Heart right ventricle (tissue), 16 donors: ENCODE measurements at regions of chr9 and their contacts with region 1.

Region 1: GRCh38 chr9:117636681-117637080 is 67.5 kb upstream of the TLR4 start:
- DNase-seq: no peak
- ATAC-seq: no peak
- H3K4me3 ChIP-seq: no peak overlapping the region
- H3K27ac ChIP-seq: no peak overlapping the region
- H3K4me1 ChIP-seq: no peaks in the 10 kb centered on the region
- H3K27me3 ChIP-seq: peaks cover 0 to 19% (median 12%) of the 10 kb centered on the region in 7 donors
- CTCF ChIP-seq: no peak

Region 2: DNA sequence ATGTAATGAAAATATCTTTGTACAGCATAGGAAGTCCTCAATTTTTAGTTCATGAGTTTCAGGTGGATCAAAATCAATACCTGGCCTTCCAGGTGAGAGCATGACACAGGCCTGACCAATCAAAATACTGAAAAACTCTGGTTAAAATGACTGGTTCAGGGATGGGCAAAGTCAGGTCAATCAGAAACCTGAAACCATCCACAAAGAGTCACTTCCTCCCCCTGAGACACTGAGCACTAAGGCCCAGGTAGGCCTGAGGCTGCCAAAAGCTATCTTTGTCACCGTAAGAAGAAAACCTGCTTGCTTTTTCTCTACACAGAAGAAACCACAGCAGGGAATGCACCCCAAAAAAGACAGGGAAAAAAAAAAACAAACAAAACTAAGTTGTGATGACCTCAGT is 512.3 kb after region 1 on chr9:
- intact Hi-C with region 1: no loop called
- DNase-seq: no peak
- ATAC-seq: no peak
- H3K4me3 ChIP-seq: no peak overlapping the region
- H3K27ac ChIP-seq: no peak overlapping the region
- H3K4me1 ChIP-seq: no peaks in the 10 kb centered on the region
- H3K27me3 ChIP-seq: peaks cover 0 to 3% (median 0%) of the 10 kb centered on the region in 7 donors
- CTCF ChIP-seq: no peak

Region 3: GRCh38 chr9:118577121-118577520 is 940.4 kb after region 1 on chr9:
- intact Hi-C with region 1: loop called in 1 of 10 experiments (anchors 10 kb)
- DNase-seq: no peak
- ATAC-seq: no peak
- H3K4me3 ChIP-seq: no peak overlapping the region
- H3K27ac ChIP-seq: no peak overlapping the region
- H3K4me1 ChIP-seq: no peaks in the 10 kb centered on the region
- H3K27me3 ChIP-seq: no peaks in the 10 kb centered on the region
- CTCF ChIP-seq: no peak